Psoas muscle (tissue), 8 donors: ENCODE measurements at regions of chr10 and their contacts with region 1.

Region 1: GRCh38 chr10:71314028-71314693 is 4.9 kb upstream of the SLC29A3 start:
- DNase-seq: peak; percentile 60 to 73
- ATAC-seq: peak; percentile 66 to 81 (median 73)
- H3K4me3 ChIP-seq: peak overlapping the region; percentile 7
- H3K27ac ChIP-seq: no peak overlapping the region
- H3K4me1 ChIP-seq: peaks cover 10% of the 10 kb centered on the region
- H3K27me3 ChIP-seq: no peaks in the 10 kb centered on the region
- CTCF ChIP-seq: peak; percentile 91

Region 2: GRCh38 chr10:71333129-71333887 is 19.1 kb after region 1 on chr10:
- intact Hi-C with region 1: no loop called
- DNase-seq: no peak
- ATAC-seq: no peak
- H3K4me3 ChIP-seq: no peak overlapping the region
- H3K27ac ChIP-seq: no peak overlapping the region
- H3K4me1 ChIP-seq: no peaks in the 10 kb centered on the region
- H3K27me3 ChIP-seq: no peaks in the 10 kb centered on the region
- CTCF ChIP-seq: no peak

Region 3: GRCh38 chr10:71569775-71570588 is 255.8 kb after region 1 on chr10:
- intact Hi-C with region 1: loop called (anchors 2 to 5 kb)
- DNase-seq: peak; percentile 69 to 79
- ATAC-seq: peak; percentile 60 to 76 (median 66)
- H3K4me3 ChIP-seq: no peak overlapping the region
- H3K27ac ChIP-seq: no peak overlapping the region
- H3K4me1 ChIP-seq: peaks cover 1% of the 10 kb centered on the region
- H3K27me3 ChIP-seq: no peaks in the 10 kb centered on the region
- CTCF ChIP-seq: peak; percentile 83

Region 4: DNA sequence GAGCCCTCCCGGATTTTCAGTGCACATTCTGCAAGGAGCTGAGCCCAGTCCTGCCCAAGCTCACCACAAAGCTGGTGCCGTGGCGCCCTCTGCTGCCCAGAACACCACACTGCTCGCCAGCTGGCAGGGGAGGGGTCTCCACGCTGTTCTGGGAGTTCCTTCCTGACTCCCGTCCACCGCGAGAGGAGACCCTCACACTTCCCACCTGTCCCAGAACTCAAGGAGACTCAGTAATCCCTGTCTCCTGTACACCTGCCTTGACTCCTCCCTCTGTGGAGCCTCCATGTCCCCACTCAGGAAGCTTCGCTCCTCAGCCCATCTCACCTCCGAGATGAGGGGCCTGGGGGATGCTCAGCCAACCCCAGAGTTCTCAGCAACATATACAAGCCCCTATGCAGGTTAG is 394.1 kb after region 1 on chr10:
- intact Hi-C with region 1: loop called (anchors 2 to 5 kb)
- DNase-seq: peak in 1 of 2 donors; percentile 75
- ATAC-seq: peak; percentile 57 to 77 (median 66)
- H3K4me3 ChIP-seq: no peak overlapping the region
- H3K27ac ChIP-seq: no peak overlapping the region
- H3K4me1 ChIP-seq: peaks cover 3% of the 10 kb centered on the region
- H3K27me3 ChIP-seq: no peaks in the 10 kb centered on the region
- CTCF ChIP-seq: peak; percentile 78

Region 5: GRCh38 chr10:71812016-71812912 is 498.1 kb after region 1 on chr10:
- intact Hi-C with region 1: loop called (anchors 2 to 5 kb)
- DNase-seq: peak; percentile 72 to 87
- ATAC-seq: peak; percentile 66 to 83 (median 75)
- H3K4me3 ChIP-seq: no peak overlapping the region
- H3K27ac ChIP-seq: no peak overlapping the region
- H3K4me1 ChIP-seq: peaks cover 7% of the 10 kb centered on the region
- H3K27me3 ChIP-seq: no peaks in the 10 kb centered on the region
- CTCF ChIP-seq: peak; percentile 79

Region 6: DNA sequence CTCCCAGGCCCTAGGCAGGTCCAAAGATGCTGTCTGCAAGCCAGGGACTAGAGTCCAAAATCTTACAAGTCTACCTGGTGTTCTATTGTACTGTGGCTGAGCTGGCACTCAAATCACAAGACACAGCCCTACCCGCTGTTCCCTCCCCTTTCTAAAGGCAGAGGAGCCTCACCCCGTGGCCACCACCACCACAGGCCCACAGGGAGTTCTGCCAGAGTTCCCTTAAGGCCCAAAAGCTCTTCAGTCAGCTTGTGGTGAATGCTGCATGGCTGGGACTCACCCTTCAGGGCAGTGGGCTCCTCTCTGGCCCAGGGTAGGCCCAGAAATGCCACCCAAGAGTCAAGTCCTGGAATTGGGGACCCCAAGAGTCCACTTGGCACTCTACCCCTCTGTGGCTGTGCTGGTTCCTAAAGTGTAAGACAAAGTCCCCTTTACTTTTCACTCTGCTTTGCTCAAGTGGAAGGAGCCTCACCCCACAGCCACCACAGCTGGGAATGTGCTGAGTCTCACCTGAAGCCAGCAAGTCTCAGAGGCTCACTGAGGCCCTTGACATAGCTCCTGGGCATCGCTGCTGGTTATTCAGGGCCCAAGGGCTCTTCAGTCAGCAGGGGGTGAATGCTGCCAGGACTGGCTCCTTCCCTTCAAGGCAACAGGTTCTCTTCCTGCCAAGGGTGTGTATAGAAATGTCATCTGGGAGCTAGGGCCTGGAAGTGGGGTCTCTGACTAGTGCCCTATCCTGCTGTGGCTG is 585.7 kb after region 1 on chr10:
- intact Hi-C with region 1: loop called in 1 of 2 experiments (anchors 5 kb)
- DNase-seq: no peak
- ATAC-seq: no peak
- H3K4me3 ChIP-seq: no peak overlapping the region
- H3K27ac ChIP-seq: no peak overlapping the region
- H3K4me1 ChIP-seq: no peaks in the 10 kb centered on the region
- H3K27me3 ChIP-seq: no peaks in the 10 kb centered on the region
- CTCF ChIP-seq: no peak